GM12878 (cell line): ENCODE measurements at regions of chr2 and their contacts with region 1.

Region 1: GRCh38 chr2:20135631-20136050 is 84.2 kb upstream of the LAPTM4A start:
- DNase-seq: no peak
- ATAC-seq: peak; percentile 98
- H3K4me3 ChIP-seq: no peak overlapping the region
- H3K27ac ChIP-seq: no peak overlapping the region
- H3K4me1 ChIP-seq: peaks cover 2% of the 10 kb centered on the region; the same call in 1 of the 2 replicates
- H3K27me3 ChIP-seq: peaks cover 0 to 3% of the 10 kb centered on the region in 2 experiments; a peak in 2 of 4 replicates
- CTCF ChIP-seq: peak; percentile 87 to 94 (median 88)
- EP300 ChIP-seq: no peak
- POLR2A ChIP-seq: no peak
- RAD21 ChIP-seq: peak; percentile 93

Region 2: DNA sequence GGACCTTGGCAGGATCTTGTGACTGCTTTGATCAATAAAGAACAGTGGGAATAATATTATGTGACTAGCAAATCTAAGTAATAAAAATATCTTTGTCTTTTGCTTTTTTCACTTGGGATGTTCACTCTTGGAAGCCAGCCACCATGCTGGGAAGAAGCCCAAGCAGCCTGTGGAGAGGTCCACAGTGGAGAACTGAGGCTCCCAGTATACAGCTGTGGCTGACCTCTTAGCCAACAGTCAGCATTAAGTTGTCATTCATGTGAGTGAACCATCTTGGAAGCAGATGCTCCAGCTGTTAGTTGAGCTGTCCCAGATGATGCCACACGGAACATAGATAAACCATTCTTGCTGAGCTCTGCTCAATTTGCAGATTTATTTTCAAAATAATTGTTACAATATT is 937.3 kb before region 1 on chr2:
- CTCF ChIA-PET with region 1: no interaction called
- POLR2A ChIA-PET with region 1: no interaction called
- RAD21 ChIA-PET with region 1: no interaction called
- SMC1A ChIA-PET with region 1: no interaction called
- in situ Hi-C with region 1: no loop called
- intact Hi-C with region 1: no loop called
- DNase-seq: no peak
- ATAC-seq: no peak
- H3K4me3 ChIP-seq: no peak overlapping the region
- H3K27ac ChIP-seq: no peak overlapping the region
- H3K4me1 ChIP-seq: no peaks in the 10 kb centered on the region
- H3K27me3 ChIP-seq: no peaks in the 10 kb centered on the region; a peak in 1 of 4 replicates
- CTCF ChIP-seq: no peak
- EP300 ChIP-seq: no peak
- POLR2A ChIP-seq: no peak
- RAD21 ChIP-seq: no peak

Region 3: GRCh38 chr2:19949071-19949470 is 186.6 kb before region 1 on chr2:
- CTCF ChIA-PET with region 1: no interaction called
- POLR2A ChIA-PET with region 1: no interaction called
- RAD21 ChIA-PET with region 1: no interaction called
- SMC1A ChIA-PET with region 1: no interaction called
- in situ Hi-C with region 1: no loop called
- intact Hi-C with region 1: no loop called
- DNase-seq: no peak
- ATAC-seq: no peak
- H3K4me3 ChIP-seq: no peak overlapping the region
- H3K27ac ChIP-seq: no peak overlapping the region
- H3K4me1 ChIP-seq: no peaks in the 10 kb centered on the region
- H3K27me3 ChIP-seq: no peaks in the 10 kb centered on the region
- CTCF ChIP-seq: no peak
- EP300 ChIP-seq: no peak
- POLR2A ChIP-seq: no peak
- RAD21 ChIP-seq: no peak

Region 4: GRCh38 chr2:20062615-20063545 is 72.8 kb before region 1 on chr2:
- CTCF ChIA-PET with region 1: no interaction called
- POLR2A ChIA-PET with region 1: interaction called, 10 read pairs
- RAD21 ChIA-PET with region 1: no interaction called
- SMC1A ChIA-PET with region 1: no interaction called
- in situ Hi-C with region 1: no loop called
- intact Hi-C with region 1: no loop called
- DNase-seq: no peak
- ATAC-seq: peak; percentile 49
- H3K4me3 ChIP-seq: no peak overlapping the region
- H3K27ac ChIP-seq: no peak overlapping the region
- H3K4me1 ChIP-seq: no peaks in the 10 kb centered on the region
- H3K27me3 ChIP-seq: no peaks in the 10 kb centered on the region; a peak in 1 of 4 replicates
- CTCF ChIP-seq: no peak
- EP300 ChIP-seq: no peak
- POLR2A ChIP-seq: no peak
- RAD21 ChIP-seq: no peak

Region 5: DNA sequence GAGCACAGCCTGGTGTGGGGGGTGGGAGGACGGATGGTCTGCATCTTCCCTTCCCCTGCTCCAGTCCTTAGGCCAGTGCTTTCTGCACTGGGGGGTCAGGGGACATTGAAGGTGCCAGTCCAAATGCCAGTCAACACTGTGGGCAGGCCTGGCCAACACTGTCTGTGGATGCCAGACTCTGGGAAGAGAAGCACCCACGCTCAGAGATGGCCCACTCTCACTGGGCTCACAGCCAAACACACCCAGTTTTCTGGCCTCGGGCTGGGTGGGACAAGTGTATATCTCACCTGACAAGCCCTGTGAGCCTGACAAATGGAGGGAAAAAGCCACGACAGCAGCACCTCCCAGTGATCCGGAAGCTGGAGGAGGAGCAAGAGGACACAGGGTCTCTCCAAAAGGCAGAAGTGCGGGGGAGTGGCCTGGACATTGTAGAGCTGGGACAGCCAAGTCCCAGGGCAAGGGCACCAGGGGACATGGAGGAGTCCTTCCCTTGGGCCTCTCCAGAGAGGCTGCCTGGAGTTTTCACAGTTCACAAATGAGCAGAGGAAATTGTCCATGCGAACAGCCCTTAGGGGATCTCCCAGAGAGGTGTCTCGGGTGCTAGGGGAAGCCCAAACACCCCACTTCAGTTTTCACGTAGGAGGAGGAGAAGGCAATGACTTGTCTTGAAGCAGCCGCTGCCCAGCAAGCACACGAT is 10.0 kb after region 1 on chr2:
- CTCF ChIA-PET with region 1: interaction called, 5 read pairs
- POLR2A ChIA-PET with region 1: interaction called, 3 read pairs
- RAD21 ChIA-PET with region 1: interaction called, 7 read pairs
- SMC1A ChIA-PET with region 1: interaction called, 14 read pairs
- in situ Hi-C with region 1: no loop called
- intact Hi-C with region 1: no loop called
- DNase-seq: peak; percentile 68
- ATAC-seq: peak; percentile 87
- H3K4me3 ChIP-seq: 0 out of 2 replicates have a peak overlapping the region, but pooled peaks have one; percentile 26
- H3K27ac ChIP-seq: peak overlapping the region; percentile 76
- H3K4me1 ChIP-seq: peaks cover 49% of the 10 kb centered on the region
- H3K27me3 ChIP-seq: no peaks in the 10 kb centered on the region
- CTCF ChIP-seq: no peak
- EP300 ChIP-seq: peak in 1 of 2 experiments; percentile 50; a peak in 1 of 4 replicates
- POLR2A ChIP-seq: no peak; the same call in 1 of the 2 replicates
- RAD21 ChIP-seq: no peak

Region 6: GRCh38 chr2:20150806-20151571 is 15.3 kb after region 1 on chr2:
- CTCF ChIA-PET with region 1: interaction called, 5 read pairs
- POLR2A ChIA-PET with region 1: interaction called, 3 read pairs
- RAD21 ChIA-PET with region 1: interaction called, 7 read pairs
- SMC1A ChIA-PET with region 1: interaction called, 14 read pairs
- in situ Hi-C with region 1: no loop called
- intact Hi-C with region 1: no loop called
- DNase-seq: peak; percentile 48
- ATAC-seq: peak; percentile 80
- H3K4me3 ChIP-seq: no peak overlapping the region
- H3K27ac ChIP-seq: peak overlapping the region; percentile 59
- H3K4me1 ChIP-seq: peaks cover 54% of the 10 kb centered on the region
- H3K27me3 ChIP-seq: no peaks in the 10 kb centered on the region
- CTCF ChIP-seq: no peak
- EP300 ChIP-seq: 0 out of 4 replicates have a peak, but pooled peaks of 1 of the 2 experiments have one; percentile 47
- POLR2A ChIP-seq: no peak
- RAD21 ChIP-seq: peak; percentile 26; the same call in 1 of the 2 replicates

Region 7: DNA sequence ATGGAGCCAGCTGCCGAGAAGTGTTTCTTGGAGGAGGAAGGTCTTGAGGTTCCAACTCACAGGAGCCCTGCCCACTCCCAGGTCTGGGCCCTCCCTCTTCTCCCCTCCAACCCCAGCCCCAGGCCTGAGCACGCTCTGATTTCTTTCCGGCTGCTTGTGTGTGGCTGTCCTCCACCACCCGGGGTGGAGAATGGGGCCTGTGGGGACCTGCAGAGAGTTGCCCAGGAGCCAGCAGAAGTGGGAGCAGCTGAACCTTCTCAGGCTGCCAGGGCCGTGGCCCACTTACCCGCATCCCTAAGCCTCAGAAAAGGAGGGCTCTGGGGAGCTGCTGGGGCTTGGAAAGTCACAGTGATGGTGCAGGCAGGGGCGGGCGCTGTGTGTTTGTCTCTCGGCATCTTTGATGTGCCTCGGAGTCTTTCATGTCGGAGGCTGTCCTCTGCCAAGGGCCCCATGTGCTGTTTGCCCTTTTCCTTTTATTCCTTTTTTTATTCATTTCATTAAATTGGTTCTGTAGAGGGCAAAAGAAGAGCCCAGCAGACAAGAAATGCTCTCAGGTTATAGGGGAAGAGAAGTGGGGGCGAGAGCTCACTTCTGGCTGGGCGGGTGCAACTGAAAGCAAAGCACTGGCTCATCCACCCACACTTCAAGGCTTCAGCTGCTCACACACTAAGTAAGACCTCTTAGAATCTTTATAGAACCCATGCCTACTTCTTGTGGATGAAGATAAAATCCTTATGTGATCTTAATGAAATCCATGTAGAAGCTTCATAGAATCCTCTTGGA is 36.8 kb after region 1 on chr2:
- CTCF ChIA-PET with region 1: no interaction called
- POLR2A ChIA-PET with region 1: no interaction called
- RAD21 ChIA-PET with region 1: no interaction called
- SMC1A ChIA-PET with region 1: interaction called, 4 read pairs
- in situ Hi-C with region 1: no loop called
- intact Hi-C with region 1: loop called (anchors 5 kb)
- DNase-seq: no peak
- ATAC-seq: 0 out of 3 replicates have a peak, but pooled peaks have one; percentile 14
- H3K4me3 ChIP-seq: no peak overlapping the region
- H3K27ac ChIP-seq: no peak overlapping the region
- H3K4me1 ChIP-seq: no peaks in the 10 kb centered on the region
- H3K27me3 ChIP-seq: no peaks in the 10 kb centered on the region; a peak in 1 of 4 replicates
- CTCF ChIP-seq: no peak
- EP300 ChIP-seq: no peak
- POLR2A ChIP-seq: no peak
- RAD21 ChIP-seq: no peak

Region 8: GRCh38 chr2:20186078-20186854 is 50.6 kb after region 1 on chr2:
- CTCF ChIA-PET with region 1: interaction called, 11 read pairs
- POLR2A ChIA-PET with region 1: no interaction called
- RAD21 ChIA-PET with region 1: interaction called, 3 read pairs
- SMC1A ChIA-PET with region 1: interaction called, 3 read pairs
- in situ Hi-C with region 1: no loop called
- intact Hi-C with region 1: no loop called
- DNase-seq: no peak
- ATAC-seq: peak; percentile 72
- H3K4me3 ChIP-seq: no peak overlapping the region
- H3K27ac ChIP-seq: no peak overlapping the region
- H3K4me1 ChIP-seq: peaks cover 14% of the 10 kb centered on the region
- H3K27me3 ChIP-seq: no peaks in the 10 kb centered on the region; a peak in 1 of 4 replicates
- CTCF ChIP-seq: no peak
- EP300 ChIP-seq: no peak; a peak in 1 of 4 replicates
- POLR2A ChIP-seq: 0 out of 2 replicates have a peak, but pooled peaks have one; percentile 42
- RAD21 ChIP-seq: no peak

Region 9: GRCh38 chr2:20398956-20399567 is 263.4 kb after region 1 on chr2:
- CTCF ChIA-PET with region 1: no interaction called
- POLR2A ChIA-PET with region 1: no interaction called
- RAD21 ChIA-PET with region 1: no interaction called
- SMC1A ChIA-PET with region 1: no interaction called
- in situ Hi-C with region 1: no loop called
- intact Hi-C with region 1: no loop called
- DNase-seq: no peak
- ATAC-seq: no peak
- H3K4me3 ChIP-seq: no peak overlapping the region
- H3K27ac ChIP-seq: no peak overlapping the region
- H3K4me1 ChIP-seq: no peaks in the 10 kb centered on the region
- H3K27me3 ChIP-seq: peaks cover 0 to 1% of the 10 kb centered on the region in 2 experiments; a peak in 2 of 4 replicates
- CTCF ChIP-seq: no peak
- EP300 ChIP-seq: no peak
- POLR2A ChIP-seq: no peak
- RAD21 ChIP-seq: no peak